Cardiac septum (tissue), 1 donor: ENCODE measurements at regions of chr5 and their contacts with region 1.

Region 1: DNA sequence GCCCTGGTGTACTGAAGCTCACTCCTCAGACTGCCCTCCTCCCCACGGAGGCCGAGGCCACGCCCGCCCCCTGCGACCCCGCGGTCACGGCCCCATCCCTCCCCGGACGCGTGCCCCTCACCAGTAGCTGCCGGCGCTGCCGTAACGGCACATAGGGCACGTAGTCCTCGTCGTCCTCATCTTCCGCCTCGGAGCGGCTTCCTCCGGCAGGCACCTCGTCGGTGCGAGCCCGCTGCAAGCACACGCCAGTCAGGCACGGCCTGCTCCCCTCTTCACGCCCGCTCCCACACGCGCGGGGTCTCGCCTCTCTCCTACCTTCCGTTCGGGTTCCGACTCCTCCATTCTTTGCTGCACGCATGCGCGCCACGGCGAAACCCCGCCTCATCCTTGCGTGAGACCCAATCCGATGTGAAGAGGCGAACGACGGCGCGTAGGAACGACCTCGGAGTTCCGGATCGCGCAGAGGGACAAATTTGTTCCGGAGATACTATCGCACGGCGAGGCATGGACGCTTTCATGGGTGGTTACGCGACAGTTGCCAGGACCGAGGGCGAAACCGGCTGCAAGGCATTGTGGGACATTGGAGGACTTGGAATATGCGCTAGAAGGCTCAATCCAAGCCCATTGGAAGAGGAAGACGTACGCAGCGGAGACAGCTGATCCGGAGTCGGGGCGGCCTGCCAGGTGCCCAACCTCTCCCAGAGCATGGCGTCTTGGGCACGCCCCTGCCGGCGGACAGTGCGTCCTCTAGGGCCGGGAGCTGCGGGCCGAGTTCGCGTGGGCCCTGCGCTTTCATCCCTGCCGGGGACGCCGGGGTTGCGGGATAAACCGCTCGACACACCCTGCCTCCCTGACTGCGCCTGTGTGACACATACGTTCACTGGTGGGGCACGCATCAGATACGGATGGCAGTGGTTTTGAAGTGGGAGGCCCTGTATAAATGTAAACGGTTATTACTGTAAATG is at the start of gene DDX41:
- DNase-seq: peak; percentile 98
- total RNA-seq, gene DDX41: 37.9 TPM

Region 2: DNA sequence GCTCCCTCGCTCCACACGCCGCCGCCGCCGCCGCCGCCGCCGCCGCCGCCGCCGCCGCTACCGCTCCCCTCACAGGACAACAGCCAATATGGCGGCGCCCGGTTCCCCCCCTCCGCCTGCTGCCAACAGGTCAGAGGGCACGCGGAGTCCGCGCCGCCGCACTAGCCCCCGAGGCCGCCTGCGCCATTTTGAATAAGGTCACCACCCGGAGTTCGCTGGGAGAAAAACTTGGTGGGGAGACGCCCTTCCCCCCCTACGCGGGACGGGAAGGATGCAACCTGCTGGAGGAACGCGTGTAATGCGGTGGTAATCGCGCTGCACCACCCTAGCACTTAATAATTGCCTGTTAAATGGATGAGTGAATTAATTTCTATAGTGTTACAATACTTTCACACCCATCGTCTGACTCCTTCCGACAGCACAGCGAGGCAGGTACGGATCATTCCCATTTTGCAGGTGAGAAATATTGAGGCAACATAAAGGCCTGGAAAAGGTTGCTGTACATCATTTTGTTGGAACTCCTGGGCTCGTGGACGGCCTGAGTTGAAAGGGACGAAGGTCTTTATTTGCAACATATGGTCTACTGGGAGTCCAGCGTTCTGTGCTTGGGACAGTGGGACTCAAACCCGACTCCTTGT is 37.7 kb after region 1 on chr5 and contains the start of gene FAM193B:
- intact Hi-C with region 1: loop called (anchors 2 kb)
- DNase-seq: peak; percentile 98
- total RNA-seq, gene FAM193B: 25.4 TPM

Region 3: DNA sequence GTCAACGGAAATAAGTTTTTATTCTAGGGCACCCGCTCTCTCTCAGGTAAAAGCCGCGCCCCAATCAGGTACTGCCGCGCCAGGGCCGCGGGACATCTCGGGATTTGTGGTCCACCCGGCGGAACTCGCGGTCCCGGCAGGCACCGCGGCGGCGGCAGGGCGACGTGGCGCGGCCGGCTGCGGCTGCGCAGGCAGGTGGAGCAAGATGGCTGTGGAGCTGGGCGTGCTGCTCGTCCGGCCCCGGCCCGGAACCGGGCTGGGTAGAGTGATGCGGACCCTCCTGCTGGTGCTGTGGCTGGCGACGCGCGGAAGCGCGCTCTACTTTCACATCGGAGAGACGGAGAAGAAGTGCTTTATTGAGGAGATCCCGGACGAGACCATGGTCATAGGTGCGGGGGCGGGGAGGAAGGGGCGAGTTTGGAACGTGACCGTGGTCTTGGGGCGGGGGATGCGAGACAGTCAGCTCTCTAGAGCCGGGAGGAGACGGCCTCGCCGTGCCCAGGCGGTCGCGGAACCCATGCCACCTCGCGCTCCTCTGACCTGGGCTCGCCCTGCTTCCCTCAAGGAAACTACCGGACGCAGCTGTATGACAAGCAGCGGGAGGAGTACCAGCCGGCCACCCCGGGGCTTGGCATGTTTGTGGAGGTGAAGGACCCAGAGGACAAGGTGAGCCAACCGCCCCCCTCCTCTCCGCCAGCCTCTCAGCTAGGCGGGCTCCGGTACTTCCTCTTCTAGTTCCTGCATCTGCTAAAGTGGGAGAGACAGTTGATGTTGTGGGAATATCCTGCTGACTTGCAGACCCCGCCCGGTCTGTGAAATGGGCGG is 75.3 kb after region 1 on chr5 and contains the start of gene TMED9:
- intact Hi-C with region 1: loop called (anchors 5 kb)
- DNase-seq: peak; percentile 96
- total RNA-seq, gene TMED9: 94.9 TPM